ENCODE measurements at regions of chr3 and their contacts with region 1.

Region 1: DNA sequence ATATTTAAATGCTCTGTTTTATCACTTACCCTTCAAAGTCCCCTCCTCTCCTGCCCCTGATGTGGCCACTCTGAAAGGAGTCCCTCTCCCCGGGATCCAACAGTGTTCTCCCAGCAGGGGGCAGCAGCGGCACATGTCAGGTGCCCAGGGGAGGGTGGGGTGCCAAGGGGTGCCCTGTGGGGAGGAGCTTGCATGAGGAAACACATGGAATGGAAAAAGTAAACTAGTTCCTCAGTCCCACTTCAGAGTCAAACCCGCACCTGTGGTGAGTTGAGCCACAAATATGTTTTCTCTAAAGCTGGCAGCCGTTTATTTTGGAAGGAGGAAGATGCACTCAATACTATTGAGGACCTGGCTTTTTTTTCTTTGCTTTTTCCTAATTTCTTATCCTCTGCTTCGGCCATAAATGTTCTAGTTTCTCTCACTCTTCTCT is 30.1 kb upstream of the NRROS start:
- DNase-seq: peak; percentile 98
- ATAC-seq: peak; percentile 93
- H3K4me3 Mint-ChIP-seq: peak overlapping the region; percentile 39
- H3K27ac Mint-ChIP-seq: peak overlapping the region; percentile 76
- H3K4me1 Mint-ChIP-seq: peaks cover 28% of the 10 kb centered on the region
- H3K27me3 Mint-ChIP-seq: no peaks in the 10 kb centered on the region

Region 2: GRCh38 chr3:196632046-196632751 is 22.8 kb after region 1 on chr3:
- CTCF ChIA-PET with region 1: interaction called, 19 read pairs
- POLR2A ChIA-PET with region 1: no interaction called
- intact Hi-C with region 1: loop called (anchors 1 kb)
- DNase-seq: peak; percentile 93
- ATAC-seq: peak; percentile 80
- H3K4me3 Mint-ChIP-seq: peak overlapping the region; percentile 81
- H3K27ac Mint-ChIP-seq: peak overlapping the region; percentile 95
- H3K4me1 Mint-ChIP-seq: peaks cover 55% of the 10 kb centered on the region
- H3K27me3 Mint-ChIP-seq: no peaks in the 10 kb centered on the region

Region 3: GRCh38 chr3:196650740-196651311 is 41.5 kb after region 1 on chr3:
- CTCF ChIA-PET with region 1: interaction called, 14 read pairs
- POLR2A ChIA-PET with region 1: no interaction called
- intact Hi-C with region 1: no loop called
- DNase-seq: no peak
- ATAC-seq: peak; percentile 80
- H3K4me3 Mint-ChIP-seq: no peak overlapping the region
- H3K27ac Mint-ChIP-seq: peak overlapping the region; percentile 13
- H3K4me1 Mint-ChIP-seq: peaks cover 37% of the 10 kb centered on the region
- H3K27me3 Mint-ChIP-seq: no peaks in the 10 kb centered on the region

Region 4: DNA sequence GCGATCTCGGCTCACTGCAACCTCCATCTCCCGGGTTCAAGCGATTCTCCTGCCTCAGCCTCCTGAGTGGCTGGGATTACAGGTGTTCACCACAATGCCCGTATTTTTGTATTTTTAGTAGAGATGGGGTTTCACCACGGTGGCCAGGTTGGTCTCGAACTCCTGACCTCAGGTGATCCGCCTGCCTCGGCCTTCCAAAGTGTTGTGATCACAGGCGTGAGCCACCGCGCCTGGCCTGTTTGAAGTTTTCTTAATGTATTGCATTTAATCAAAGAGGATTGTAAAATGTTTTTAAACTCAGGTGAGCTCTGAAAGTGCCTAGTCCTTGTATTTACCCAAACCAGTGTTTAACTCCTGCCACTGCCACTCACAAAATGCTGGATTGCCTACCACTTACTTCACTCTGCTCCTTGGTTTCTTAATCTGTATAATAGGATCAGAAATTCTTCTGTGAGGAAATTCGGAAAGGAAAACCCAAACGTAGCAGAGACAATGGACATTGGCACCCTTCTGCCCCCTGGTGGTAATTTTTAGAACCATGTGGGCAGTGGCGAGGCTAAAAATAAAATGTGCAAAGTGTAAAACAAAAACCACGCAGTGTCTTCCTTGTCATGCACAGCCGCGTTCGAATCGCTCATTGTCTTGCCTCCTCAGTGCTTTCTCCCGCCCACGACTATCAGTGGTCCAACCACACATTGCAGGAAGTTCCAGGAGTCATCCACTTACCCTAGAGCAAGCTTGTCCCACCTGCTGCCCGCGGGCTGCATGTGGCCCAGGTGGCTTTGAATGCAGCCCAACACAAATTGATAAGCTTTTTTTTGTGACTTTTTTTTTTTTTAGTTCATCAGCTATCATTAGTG is 75.4 kb after region 1 on chr3:
- CTCF ChIA-PET with region 1: interaction called, 216 read pairs
- POLR2A ChIA-PET with region 1: no interaction called
- intact Hi-C with region 1: loop called (anchors 1 kb)
- DNase-seq: peak; percentile 77
- ATAC-seq: peak; percentile 93
- H3K4me3 Mint-ChIP-seq: peak overlapping the region; percentile 13
- H3K27ac Mint-ChIP-seq: peak overlapping the region; percentile 75
- H3K4me1 Mint-ChIP-seq: peaks cover 12% of the 10 kb centered on the region
- H3K27me3 Mint-ChIP-seq: no peaks in the 10 kb centered on the region

Region 5: GRCh38 chr3:196867507-196868296 is 258.3 kb after region 1 on chr3 and contains the start of gene SENP5:
- CTCF ChIA-PET with region 1: no interaction called
- POLR2A ChIA-PET with region 1: no interaction called
- intact Hi-C with region 1: loop called in 1 of 2 experiments (anchors 1 kb)
- DNase-seq: peak; percentile 95
- ATAC-seq: peak; percentile 96
- H3K4me3 Mint-ChIP-seq: peak within 1 kb of the TSS; percentile 99
- H3K27ac Mint-ChIP-seq: peak within 1 kb of the TSS; percentile 95
- H3K4me1 Mint-ChIP-seq: peaks cover 24% of the 10 kb centered on the region
- H3K27me3 Mint-ChIP-seq: no peaks in the 10 kb centered on the region
- total RNA-seq, gene SENP5: 27.7 to 33.0 TPM

Measured in activated CD4-positive, alpha-beta T cell treated with anti-CD3 and anti-CD28 coated beads for 36 hours (primary cell).